A673 (cell line): ENCODE measurements at regions of chr7 and their contacts with region 1.

Region 1: GRCh38 chr7:25186436-25186835 is 41.9 kb downstream of the NPVF start:
- DNase-seq: no peak
- H3K4me3 ChIP-seq: no peak overlapping the region
- H3K27ac ChIP-seq: no peak overlapping the region
- H3K4me1 ChIP-seq: no peaks in the 10 kb centered on the region
- H3K27me3 ChIP-seq: peaks cover 3% of the 10 kb centered on the region
- CTCF ChIP-seq: no peak

Region 2: DNA sequence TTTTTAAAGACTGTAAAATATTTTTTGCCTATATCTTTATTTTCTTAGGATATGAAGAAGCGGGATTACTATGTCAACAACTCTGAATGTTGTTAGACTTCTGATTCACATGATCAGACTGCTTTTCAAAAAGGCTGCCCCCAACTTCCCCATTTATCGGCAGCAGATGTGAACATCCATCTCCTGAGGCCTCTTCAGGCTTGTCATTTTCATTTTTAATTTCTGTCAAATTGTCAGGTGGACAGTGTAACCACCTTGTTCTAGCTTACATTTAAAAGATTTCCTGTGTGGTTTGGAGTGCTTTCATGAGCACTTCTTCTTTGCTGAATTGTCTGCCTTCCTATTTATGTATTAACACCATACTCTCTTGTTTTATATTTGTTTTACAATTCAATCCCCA is 350.4 kb before region 1 on chr7:
- CTCF ChIA-PET with region 1: no interaction called
- POLR2A ChIA-PET with region 1: no interaction called
- intact Hi-C with region 1: no loop called
- DNase-seq: no peak
- H3K4me3 ChIP-seq: no peak overlapping the region
- H3K27ac ChIP-seq: no peak overlapping the region
- H3K4me1 ChIP-seq: no peaks in the 10 kb centered on the region
- H3K27me3 ChIP-seq: no peaks in the 10 kb centered on the region
- CTCF ChIP-seq: no peak

Region 3: GRCh38 chr7:25125137-25125946 is 61.1 kb before region 1 on chr7 and contains the start of gene CYCS:
- CTCF ChIA-PET with region 1: no interaction called
- POLR2A ChIA-PET with region 1: interaction called, 13 read pairs
- intact Hi-C with region 1: no loop called
- DNase-seq: peak; percentile 100
- H3K4me3 ChIP-seq: peak within 1 kb of the TSS; percentile 87
- H3K27ac ChIP-seq: peak within 1 kb of the TSS; percentile 81
- H3K4me1 ChIP-seq: no peaks in the 10 kb centered on the region
- H3K27me3 ChIP-seq: no peaks in the 10 kb centered on the region
- CTCF ChIP-seq: no peak
- total RNA-seq, gene CYCS: 274 and 350 TPM in 2 replicates

Region 4: DNA sequence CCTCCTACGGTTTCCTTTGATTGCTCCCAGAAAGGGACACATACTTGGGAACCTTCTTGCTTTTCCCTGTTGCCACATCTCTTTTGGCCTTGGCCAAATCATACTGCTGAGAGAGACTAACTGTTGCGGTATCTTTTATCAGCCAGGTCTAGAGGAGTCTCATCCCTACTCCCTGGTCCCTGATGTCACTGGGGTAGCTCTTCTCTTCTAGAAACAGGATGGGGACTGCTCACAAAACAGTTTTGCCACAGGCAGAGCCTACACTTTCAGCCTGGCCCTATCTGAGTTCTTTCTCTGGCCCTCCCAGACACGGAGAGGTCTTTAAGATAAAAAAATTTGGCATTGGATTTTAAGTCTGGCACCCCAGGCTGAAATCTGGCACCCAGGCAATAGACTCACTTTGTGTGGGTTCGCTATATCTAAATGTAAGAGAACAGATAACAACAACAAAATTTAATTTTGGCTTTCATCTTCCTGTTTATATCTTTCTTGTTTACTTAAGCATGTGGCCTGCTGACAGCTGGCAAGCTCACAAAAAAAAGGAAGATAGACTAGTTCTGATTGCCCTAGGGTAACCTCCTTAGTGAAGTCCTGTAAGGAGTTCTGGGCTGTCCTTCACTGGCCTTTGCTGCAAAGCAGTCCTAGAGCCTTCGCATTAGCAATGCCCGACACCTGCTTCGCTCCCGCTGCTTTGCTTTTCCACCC is 270.2 kb after region 1 on chr7:
- CTCF ChIA-PET with region 1: no interaction called
- POLR2A ChIA-PET with region 1: no interaction called
- intact Hi-C with region 1: no loop called
- DNase-seq: no peak
- H3K4me3 ChIP-seq: no peak overlapping the region
- H3K27ac ChIP-seq: no peak overlapping the region
- H3K4me1 ChIP-seq: no peaks in the 10 kb centered on the region
- H3K27me3 ChIP-seq: peaks cover 40% of the 10 kb centered on the region
- CTCF ChIP-seq: no peak

Region 5: GRCh38 chr7:25926009-25926408 is 739.6 kb after region 1 on chr7:
- CTCF ChIA-PET with region 1: no interaction called
- POLR2A ChIA-PET with region 1: no interaction called
- intact Hi-C with region 1: no loop called
- DNase-seq: peak; percentile 75
- H3K4me3 ChIP-seq: no peak overlapping the region
- H3K27ac ChIP-seq: peak overlapping the region; percentile 69
- H3K4me1 ChIP-seq: peaks cover 52% of the 10 kb centered on the region
- H3K27me3 ChIP-seq: no peaks in the 10 kb centered on the region
- CTCF ChIP-seq: no peak